ENCODE measurements at regions of chr6 and their contacts with region 1.

Region 1: DNA sequence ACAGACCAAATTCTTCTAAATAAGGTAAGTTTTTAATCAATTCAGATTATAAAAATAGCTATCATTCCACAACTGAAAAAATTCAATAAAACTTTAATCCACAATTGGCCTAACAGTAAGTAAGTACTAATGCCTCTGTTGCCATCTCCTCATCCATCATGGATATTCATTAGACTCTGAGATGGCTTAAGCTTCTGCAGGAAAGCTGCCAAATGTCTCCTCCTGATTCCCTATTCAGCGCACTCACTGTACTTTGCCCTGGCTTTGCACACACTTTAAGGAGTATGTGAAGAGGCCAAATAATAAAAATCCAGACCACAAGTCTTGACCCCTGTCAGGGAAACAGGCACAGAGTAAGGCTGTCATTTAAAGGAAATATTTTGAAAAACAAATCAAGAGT is 23.6 kb downstream of the PGM3 start:
- DNase-seq: no peak
- H3K4me3 ChIP-seq: no peak overlapping the region
- H3K4me3 Mint-ChIP-seq: no peak overlapping the region
- H3K27ac ChIP-seq: no peak overlapping the region
- H3K27ac Mint-ChIP-seq: peak overlapping the region in 1 of 7 donors; percentile 33
- H3K4me1 ChIP-seq: no peaks in the 10 kb centered on the region
- H3K4me1 Mint-ChIP-seq: no peaks in the 10 kb centered on the region
- H3K27me3 ChIP-seq: no peaks in the 10 kb centered on the region
- H3K27me3 Mint-ChIP-seq: no peaks in the 10 kb centered on the region

Region 2: DNA sequence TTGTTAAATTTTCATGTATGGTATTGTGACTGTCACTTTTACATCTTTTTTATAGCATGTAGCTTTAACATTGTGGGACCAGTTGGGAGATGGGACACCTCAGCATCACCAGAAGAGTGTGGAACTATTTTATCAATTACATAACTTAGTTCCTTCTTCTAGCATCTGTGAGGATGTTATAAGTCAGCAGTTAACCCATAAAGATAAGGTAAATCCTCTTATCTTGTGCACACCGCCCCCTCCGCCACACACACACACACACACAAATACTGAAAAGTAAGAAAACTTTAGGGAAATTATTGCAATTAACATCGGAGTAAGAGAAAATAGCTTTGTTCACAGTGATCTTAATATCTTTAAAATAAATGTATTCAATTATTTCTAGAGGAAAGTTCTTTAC is 37.4 kb before region 1 on chr6:
- CTCF ChIA-PET with region 1: no interaction called
- POLR2A ChIA-PET with region 1: no interaction called
- intact Hi-C with region 1: loop called (anchors 5 kb)
- DNase-seq: no peak
- H3K4me3 ChIP-seq: no peak overlapping the region
- H3K4me3 Mint-ChIP-seq: no peak overlapping the region
- H3K27ac ChIP-seq: no peak overlapping the region
- H3K27ac Mint-ChIP-seq: peak overlapping the region in 2 of 7 donors; percentile 1 to 29
- H3K4me1 ChIP-seq: no peaks in the 10 kb centered on the region
- H3K4me1 Mint-ChIP-seq: no peaks in the 10 kb centered on the region
- H3K27me3 ChIP-seq: no peaks in the 10 kb centered on the region
- H3K27me3 Mint-ChIP-seq: no peaks in the 10 kb centered on the region

Region 3: DNA sequence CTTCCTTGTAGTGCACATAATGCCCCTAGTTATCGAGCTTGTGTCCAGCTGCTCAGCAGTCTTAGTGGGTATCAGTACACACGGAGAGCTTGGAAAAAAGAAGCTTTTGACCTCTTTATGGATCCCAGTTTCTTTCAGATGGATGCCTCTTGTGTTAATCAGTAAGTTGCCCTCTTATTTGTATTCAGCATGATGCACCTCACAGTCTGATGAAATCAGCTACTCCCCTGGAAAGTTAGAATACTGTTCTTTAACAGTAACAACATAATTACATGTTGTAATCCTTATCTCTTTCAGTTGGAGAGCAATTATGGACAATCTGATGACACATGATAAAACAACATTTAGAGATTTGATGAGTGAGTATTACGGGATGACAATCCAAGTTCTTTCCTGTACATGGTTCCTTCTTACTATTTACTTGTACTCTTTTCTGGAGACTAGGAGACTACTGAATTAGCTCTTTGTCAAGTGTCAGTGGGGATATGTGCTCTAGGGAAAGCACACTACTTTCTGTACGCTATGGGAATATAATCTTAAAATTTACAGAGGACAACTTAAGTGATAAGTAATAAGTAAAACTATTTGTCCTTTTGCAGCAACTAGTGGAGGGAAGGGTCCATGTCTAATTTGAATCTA is 15.5 kb before region 1 on chr6:
- CTCF ChIA-PET with region 1: interaction called, 11 read pairs
- POLR2A ChIA-PET with region 1: no interaction called
- intact Hi-C with region 1: no loop called
- DNase-seq: no peak
- H3K4me3 ChIP-seq: no peak overlapping the region
- H3K4me3 Mint-ChIP-seq: no peak overlapping the region
- H3K27ac ChIP-seq: no peak overlapping the region
- H3K27ac Mint-ChIP-seq: peak overlapping the region in 1 of 7 donors; percentile 1
- H3K4me1 ChIP-seq: no peaks in the 10 kb centered on the region
- H3K4me1 Mint-ChIP-seq: peaks cover 0 to 3% (median 0%) of the 10 kb centered on the region in 4 donors
- H3K27me3 ChIP-seq: no peaks in the 10 kb centered on the region
- H3K27me3 Mint-ChIP-seq: no peaks in the 10 kb centered on the region